ENCODE measurements at regions of chr5 and their contacts with region 1.

Region 1: DNA sequence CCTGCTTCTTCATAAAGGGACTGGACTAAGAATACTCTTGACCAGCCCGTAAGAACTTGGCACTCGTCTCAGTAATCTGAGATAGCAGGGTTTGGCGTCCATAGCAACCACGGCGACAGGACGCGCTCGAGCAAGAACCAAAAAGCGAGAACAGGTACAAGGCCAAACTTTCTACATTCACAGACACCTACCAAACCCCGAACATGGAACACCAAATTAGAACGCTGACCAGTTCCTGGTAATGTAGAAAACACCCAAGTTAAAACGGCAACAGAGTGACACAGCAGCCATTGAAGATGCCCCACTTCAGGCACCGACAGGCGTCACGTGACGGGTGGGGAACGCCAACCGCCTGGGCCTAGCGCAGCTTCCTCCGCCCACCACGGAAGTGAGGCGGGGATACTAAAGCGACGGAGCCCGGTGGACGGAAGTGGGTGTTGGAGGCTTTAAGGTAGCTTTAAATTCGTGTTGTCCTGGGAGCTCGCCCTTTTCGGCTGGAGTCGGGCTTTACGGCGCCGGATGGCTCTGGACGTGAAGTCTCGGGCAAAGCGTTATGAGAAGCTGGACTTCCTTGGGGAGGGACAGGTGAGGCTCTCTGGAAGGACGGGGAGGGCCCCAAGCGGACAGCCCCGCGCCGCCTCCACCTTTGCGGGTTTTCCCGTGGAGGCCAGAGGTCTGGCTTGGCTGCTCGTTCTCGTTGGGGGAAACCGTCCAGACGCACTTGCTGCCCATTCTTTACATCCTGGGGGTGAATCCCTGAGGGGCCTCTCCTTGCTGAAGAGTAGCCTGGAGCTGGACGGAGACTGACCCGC is at the start of gene CDK7:
- DNase-seq: peak; percentile 92
- H3K4me3 Mint-ChIP-seq: peak within 1 kb of the TSS; percentile 97
- H3K27ac Mint-ChIP-seq: peak within 1 kb of the TSS; percentile 84
- H3K4me1 Mint-ChIP-seq: peaks cover 43% of the 10 kb centered on the region
- H3K27me3 Mint-ChIP-seq: no peaks in the 10 kb centered on the region
- total RNA-seq, gene CDK7: 42.4 and 49.2 TPM in 2 replicates

Region 2: GRCh38 chr5:68839019-68839552 is 395.6 kb before region 1 on chr5:
- intact Hi-C with region 1: no loop called
- DNase-seq: no peak
- H3K4me3 Mint-ChIP-seq: no peak overlapping the region
- H3K27ac Mint-ChIP-seq: no peak overlapping the region
- H3K4me1 Mint-ChIP-seq: no peaks in the 10 kb centered on the region
- H3K27me3 Mint-ChIP-seq: no peaks in the 10 kb centered on the region

Region 3: GRCh38 chr5:69024241-69024651 is 210.4 kb before region 1 on chr5:
- intact Hi-C with region 1: loop called (anchors 1 kb)
- DNase-seq: peak; percentile 4
- H3K4me3 Mint-ChIP-seq: no peak overlapping the region
- H3K27ac Mint-ChIP-seq: no peak overlapping the region
- H3K4me1 Mint-ChIP-seq: peaks cover 4% of the 10 kb centered on the region
- H3K27me3 Mint-ChIP-seq: peaks cover 28% of the 10 kb centered on the region

Region 4: GRCh38 chr5:69189162-69190086 is 45.2 kb before region 1 on chr5 and contains the start of gene CENPH:
- intact Hi-C with region 1: loop called (anchors 1 kb)
- DNase-seq: peak; percentile 92
- H3K4me3 Mint-ChIP-seq: peak within 1 kb of the TSS; percentile 94
- H3K27ac Mint-ChIP-seq: peak within 1 kb of the TSS; percentile 98
- H3K4me1 Mint-ChIP-seq: peaks cover 16% of the 10 kb centered on the region
- H3K27me3 Mint-ChIP-seq: no peaks in the 10 kb centered on the region
- total RNA-seq, gene CENPH: 32.3 and 35.5 TPM in 2 replicates

Region 5: DNA sequence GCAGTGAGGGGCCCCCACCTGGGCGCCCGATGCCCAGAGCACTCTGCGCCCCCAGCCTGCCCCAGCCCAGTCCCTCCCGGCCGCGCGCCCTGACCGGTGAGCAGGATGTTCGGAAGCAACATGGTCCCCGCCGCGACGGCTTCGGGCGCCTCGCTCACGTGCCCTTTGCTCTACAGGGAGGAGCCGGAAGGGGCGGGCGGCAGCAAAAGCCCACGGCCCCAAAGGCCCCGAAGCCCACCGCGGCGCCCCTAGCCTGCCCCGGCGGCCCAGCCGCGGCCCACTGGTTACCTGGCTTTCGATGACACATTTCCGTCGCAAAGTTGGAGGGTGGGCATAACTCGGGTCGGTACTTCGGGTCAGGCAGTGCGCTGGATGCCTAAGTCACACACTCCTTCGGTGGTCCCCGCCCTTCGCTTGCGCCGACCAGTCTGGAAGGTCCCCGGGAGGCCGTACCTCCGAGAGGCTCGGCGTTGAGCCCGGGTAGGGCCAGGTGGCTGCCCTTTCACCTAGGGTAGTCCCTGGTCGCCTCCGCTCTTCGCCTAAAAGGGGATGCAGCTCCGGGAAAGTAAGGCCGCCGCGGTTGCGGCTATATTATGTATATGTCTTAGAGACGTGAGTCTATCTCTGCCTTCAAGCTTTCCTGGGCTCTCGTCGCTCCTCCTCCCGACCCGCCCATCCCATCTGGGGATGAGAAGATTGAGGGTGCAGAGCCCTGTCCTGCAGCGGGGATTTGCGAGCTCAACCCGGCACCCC is 134.9 kb after region 1 on chr5 and contains the starts of genes AK6, RAD17 and TAF9:
- intact Hi-C with region 1: loop called (anchors 1 kb)
- DNase-seq: peak; percentile 87
- H3K4me3 Mint-ChIP-seq: peak within 1 kb of the TSS; percentile 98
- H3K27ac Mint-ChIP-seq: peak within 1 kb of the TSS; percentile 98
- H3K4me1 Mint-ChIP-seq: peaks cover 36% of the 10 kb centered on the region
- H3K27me3 Mint-ChIP-seq: no peaks in the 10 kb centered on the region
- total RNA-seq, gene AK6: 59.0 and 62.3 TPM in 2 replicates
- total RNA-seq, gene RAD17: 22.0 and 26.9 TPM in 2 replicates
- total RNA-seq, gene TAF9: 60.0 and 65.0 TPM in 2 replicates